ENCODE measurements at regions of chr5 and their contacts with region 1.

Region 1: GRCh38 chr5:72307968-72308852 is 11.8 kb downstream of the MRPS27 start:
- DNase-seq: peak; percentile 89 to 98 (median 94)
- ATAC-seq: peak; percentile 97
- H3K4me3 ChIP-seq: peak overlapping the region; percentile 80 to 96
- H3K4me3 Mint-ChIP-seq: peak overlapping the region; percentile 93
- H3K27ac ChIP-seq: peak overlapping the region; percentile 91 to 95
- H3K27ac Mint-ChIP-seq: peak overlapping the region; percentile 96
- H3K4me1 ChIP-seq: peaks cover 10% of the 10 kb centered on the region
- H3K4me1 Mint-ChIP-seq: peaks cover 31% of the 10 kb centered on the region
- H3K27me3 ChIP-seq: no peaks in the 10 kb centered on the region
- H3K27me3 Mint-ChIP-seq: no peaks in the 10 kb centered on the region
- CTCF ChIP-seq: peak; percentile 83

Region 2: DNA sequence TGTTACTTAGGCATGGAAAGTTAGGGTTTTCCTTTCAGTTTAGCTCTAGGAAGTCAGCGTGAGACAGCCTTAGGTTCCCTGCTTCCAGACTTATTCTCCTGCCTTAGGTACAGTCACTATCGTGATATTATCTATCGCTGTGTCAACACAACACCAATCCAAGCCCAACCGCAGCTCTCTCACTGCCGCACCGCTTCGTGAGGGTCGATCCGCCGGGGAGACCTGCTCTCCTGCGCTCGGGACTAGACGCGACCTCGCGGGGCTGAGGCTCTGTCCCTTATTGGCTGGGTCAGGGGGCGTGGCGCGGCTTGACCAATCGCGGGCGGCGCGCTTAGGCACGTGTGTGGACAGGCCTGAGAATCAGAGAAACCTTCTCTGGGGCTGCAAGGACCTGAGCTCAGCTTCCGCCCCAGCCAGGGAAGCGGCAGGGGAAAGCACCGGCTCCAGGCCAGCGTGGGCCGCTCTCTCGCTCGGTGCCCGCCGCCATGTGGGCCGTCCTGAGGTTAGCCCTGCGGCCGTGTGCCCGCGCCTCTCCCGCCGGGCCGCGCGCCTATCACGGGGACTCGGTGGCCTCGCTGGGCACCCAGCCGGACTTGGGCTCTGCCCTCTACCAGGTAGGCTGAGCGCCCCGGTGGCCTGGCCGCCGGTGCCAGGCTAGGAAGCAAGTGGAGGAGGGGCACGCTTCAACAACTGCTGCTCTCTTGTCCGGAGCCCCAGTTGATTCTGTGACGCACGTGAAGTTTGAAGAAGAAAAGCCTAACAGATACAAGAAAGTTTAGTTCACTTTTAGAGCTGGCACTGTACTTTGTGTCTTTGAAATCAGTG is 721.1 kb before region 1 on chr5 and contains the start of gene MCCC2:
- CTCF ChIA-PET with region 1: no interaction called
- POLR2A ChIA-PET with region 1: no interaction called
- intact Hi-C with region 1: loop called (anchors 2 to 5 kb)
- DNase-seq: peak; percentile 93 to 97 (median 96)
- ATAC-seq: peak; percentile 97
- H3K4me3 ChIP-seq: peak within 1 kb of the TSS; percentile 82 to 88
- H3K4me3 Mint-ChIP-seq: peak within 1 kb of the TSS; percentile 96
- H3K27ac ChIP-seq: peak within 1 kb of the TSS; percentile 72 to 95
- H3K27ac Mint-ChIP-seq: peak within 1 kb of the TSS; percentile 98
- H3K4me1 ChIP-seq: peaks cover 32% of the 10 kb centered on the region
- H3K4me1 Mint-ChIP-seq: peaks cover 45% of the 10 kb centered on the region
- H3K27me3 ChIP-seq: no peaks in the 10 kb centered on the region
- H3K27me3 Mint-ChIP-seq: no peaks in the 10 kb centered on the region
- CTCF ChIP-seq: no peak
- total RNA-seq, gene MCCC2: 16.0 to 18.2 TPM

Region 3: DNA sequence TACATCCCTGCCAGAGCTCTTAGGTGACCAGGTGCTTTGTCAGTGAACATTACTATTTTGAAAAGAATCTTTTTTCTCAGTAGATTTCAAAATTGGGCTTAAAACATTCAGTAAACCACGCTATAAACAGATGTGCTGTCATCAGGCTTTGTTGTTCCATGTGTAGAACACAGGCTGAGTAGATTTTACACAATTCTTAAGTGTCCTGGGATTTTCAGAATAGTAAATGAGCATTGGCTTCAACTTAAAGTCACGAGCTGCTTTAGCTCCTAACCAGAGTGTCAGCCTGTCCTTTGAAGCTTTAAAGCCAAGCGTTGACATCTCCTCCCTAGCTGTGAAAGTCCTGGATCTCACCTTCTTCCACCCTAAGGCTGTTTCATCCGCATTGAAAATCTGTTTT is 505.5 kb before region 1 on chr5:
- CTCF ChIA-PET with region 1: no interaction called
- POLR2A ChIA-PET with region 1: no interaction called
- intact Hi-C with region 1: no loop called
- DNase-seq: no peak
- ATAC-seq: no peak
- H3K4me3 ChIP-seq: no peak overlapping the region
- H3K4me3 Mint-ChIP-seq: no peak overlapping the region
- H3K27ac ChIP-seq: no peak overlapping the region
- H3K27ac Mint-ChIP-seq: no peak overlapping the region
- H3K4me1 ChIP-seq: no peaks in the 10 kb centered on the region
- H3K4me1 Mint-ChIP-seq: no peaks in the 10 kb centered on the region
- H3K27me3 ChIP-seq: no peaks in the 10 kb centered on the region
- H3K27me3 Mint-ChIP-seq: peaks cover 20% of the 10 kb centered on the region
- CTCF ChIP-seq: no peak

Region 4: GRCh38 chr5:72138943-72139521 is 169.2 kb before region 1 on chr5:
- CTCF ChIA-PET with region 1: interaction called, 46 read pairs
- POLR2A ChIA-PET with region 1: interaction called, 3 read pairs
- intact Hi-C with region 1: loop called (anchors 1 kb)
- DNase-seq: peak in 2 of 9 experiments; percentile 19 to 38
- ATAC-seq: no peak
- H3K4me3 ChIP-seq: no peak overlapping the region
- H3K4me3 Mint-ChIP-seq: no peak overlapping the region
- H3K27ac ChIP-seq: no peak overlapping the region
- H3K27ac Mint-ChIP-seq: no peak overlapping the region
- H3K4me1 ChIP-seq: no peaks in the 10 kb centered on the region
- H3K4me1 Mint-ChIP-seq: no peaks in the 10 kb centered on the region
- H3K27me3 ChIP-seq: peaks cover 0 to 3% of the 10 kb centered on the region in 2 experiments
- H3K27me3 Mint-ChIP-seq: peaks cover 24% of the 10 kb centered on the region
- CTCF ChIP-seq: no peak

Region 5: DNA sequence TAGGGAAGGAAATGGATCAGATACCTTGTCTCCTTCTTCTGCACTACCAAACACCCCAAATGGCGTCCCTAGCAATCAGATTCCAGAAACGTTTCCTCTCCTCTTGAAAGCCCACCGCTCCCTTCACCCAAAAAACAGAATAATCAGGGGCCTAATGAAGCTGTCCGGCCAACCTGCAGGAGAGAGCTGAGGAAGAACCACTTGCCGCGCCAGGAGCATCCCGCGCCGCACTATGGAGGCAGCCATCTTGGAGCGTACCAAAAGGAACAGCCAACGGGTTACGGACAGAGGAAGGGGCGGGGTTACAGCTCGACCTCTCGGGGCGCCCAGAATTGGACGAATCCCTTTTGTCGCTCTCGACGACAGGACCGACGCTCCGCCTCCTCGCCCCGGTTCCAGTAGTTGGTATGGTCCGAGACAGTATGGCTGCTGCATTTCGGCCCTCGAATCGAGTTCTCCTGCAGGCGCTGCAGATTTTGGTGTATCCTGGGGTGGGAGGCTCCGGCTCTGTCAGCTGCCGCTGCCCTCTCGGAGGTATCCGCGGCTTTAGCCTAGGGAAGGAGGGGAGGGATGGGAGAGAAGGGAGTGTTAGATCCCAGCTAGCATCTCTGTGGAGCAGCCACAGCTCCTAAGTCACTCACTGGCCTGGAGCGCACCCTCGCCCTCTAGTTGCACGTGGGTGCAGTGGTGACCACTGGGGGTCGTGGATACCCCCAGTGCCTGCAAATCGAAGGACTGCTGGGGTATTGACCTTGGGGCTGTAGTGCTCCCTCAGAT is 12.0 kb after region 1 on chr5 and contains the starts of genes MRPS27 and PTCD2:
- CTCF ChIA-PET with region 1: interaction called, 29 read pairs
- POLR2A ChIA-PET with region 1: interaction called, 47 read pairs
- intact Hi-C with region 1: loop called (anchors 1 kb)
- DNase-seq: peak; percentile 88 to 99 (median 92)
- ATAC-seq: peak; percentile 99
- H3K4me3 ChIP-seq: peak within 1 kb of the TSS; percentile 73 to 95
- H3K4me3 Mint-ChIP-seq: peak within 1 kb of the TSS; percentile 97
- H3K27ac ChIP-seq: peak within 1 kb of the TSS; percentile 57 to 73
- H3K27ac Mint-ChIP-seq: peak within 1 kb of the TSS; percentile 96
- H3K4me1 ChIP-seq: peaks cover 10% of the 10 kb centered on the region
- H3K4me1 Mint-ChIP-seq: peaks cover 39% of the 10 kb centered on the region
- H3K27me3 ChIP-seq: no peaks in the 10 kb centered on the region
- H3K27me3 Mint-ChIP-seq: no peaks in the 10 kb centered on the region
- CTCF ChIP-seq: no peak
- total RNA-seq, gene MRPS27: 24.1 to 27.3 TPM
- total RNA-seq, gene PTCD2: 3.7 TPM

Region 6: DNA sequence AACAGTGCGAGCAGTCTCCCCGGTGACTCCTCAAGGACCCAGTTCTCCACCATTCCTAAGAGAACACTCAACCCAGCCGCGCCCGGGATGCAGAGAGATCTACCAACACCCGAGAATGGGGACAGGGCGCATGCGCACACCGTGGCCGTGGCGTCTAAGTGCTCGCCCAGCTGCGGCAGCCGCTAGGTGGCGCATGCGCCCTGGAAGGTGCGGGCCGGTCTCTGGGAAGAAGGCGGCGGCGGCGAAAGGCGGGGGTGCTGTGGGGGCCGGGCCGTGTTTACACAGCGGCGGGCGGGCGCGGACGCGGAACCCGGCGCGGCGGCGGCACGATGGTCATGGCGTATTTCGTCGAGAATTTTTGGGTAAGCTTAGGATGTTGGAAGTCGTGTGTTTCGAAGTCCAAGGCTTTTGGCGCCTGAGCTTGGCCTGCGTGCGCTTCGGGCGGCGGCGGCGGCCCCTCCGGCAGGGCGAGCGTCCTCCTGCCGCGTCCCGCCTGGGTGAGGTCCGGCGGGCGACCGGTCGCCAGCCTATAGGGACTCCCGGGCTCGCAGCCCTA is 647.6 kb after region 1 on chr5 and contains the start of gene FCHO2:
- CTCF ChIA-PET with region 1: no interaction called
- POLR2A ChIA-PET with region 1: no interaction called
- intact Hi-C with region 1: loop called in 1 of 2 experiments (anchors 1 kb)
- DNase-seq: peak; percentile 88 to 98 (median 96)
- ATAC-seq: peak; percentile 90
- H3K4me3 ChIP-seq: peak within 1 kb of the TSS; percentile 61 to 95
- H3K4me3 Mint-ChIP-seq: peak within 1 kb of the TSS; percentile 95
- H3K27ac ChIP-seq: no peak within 1 kb of the TSS
- H3K27ac Mint-ChIP-seq: peak within 1 kb of the TSS; percentile 88
- H3K4me1 ChIP-seq: peaks cover 12% of the 10 kb centered on the region
- H3K4me1 Mint-ChIP-seq: peaks cover 15% of the 10 kb centered on the region
- H3K27me3 ChIP-seq: peaks cover 6 to 9% of the 10 kb centered on the region in 2 experiments
- H3K27me3 Mint-ChIP-seq: peaks cover 41% of the 10 kb centered on the region
- CTCF ChIP-seq: peak; percentile 65
- total RNA-seq, gene FCHO2: 2.4 to 2.9 TPM

Measured in CD8-positive, alpha-beta T cell (primary cell).